ENCODE measurements at regions of chr12 and their contacts with region 1.

Region 1: DNA sequence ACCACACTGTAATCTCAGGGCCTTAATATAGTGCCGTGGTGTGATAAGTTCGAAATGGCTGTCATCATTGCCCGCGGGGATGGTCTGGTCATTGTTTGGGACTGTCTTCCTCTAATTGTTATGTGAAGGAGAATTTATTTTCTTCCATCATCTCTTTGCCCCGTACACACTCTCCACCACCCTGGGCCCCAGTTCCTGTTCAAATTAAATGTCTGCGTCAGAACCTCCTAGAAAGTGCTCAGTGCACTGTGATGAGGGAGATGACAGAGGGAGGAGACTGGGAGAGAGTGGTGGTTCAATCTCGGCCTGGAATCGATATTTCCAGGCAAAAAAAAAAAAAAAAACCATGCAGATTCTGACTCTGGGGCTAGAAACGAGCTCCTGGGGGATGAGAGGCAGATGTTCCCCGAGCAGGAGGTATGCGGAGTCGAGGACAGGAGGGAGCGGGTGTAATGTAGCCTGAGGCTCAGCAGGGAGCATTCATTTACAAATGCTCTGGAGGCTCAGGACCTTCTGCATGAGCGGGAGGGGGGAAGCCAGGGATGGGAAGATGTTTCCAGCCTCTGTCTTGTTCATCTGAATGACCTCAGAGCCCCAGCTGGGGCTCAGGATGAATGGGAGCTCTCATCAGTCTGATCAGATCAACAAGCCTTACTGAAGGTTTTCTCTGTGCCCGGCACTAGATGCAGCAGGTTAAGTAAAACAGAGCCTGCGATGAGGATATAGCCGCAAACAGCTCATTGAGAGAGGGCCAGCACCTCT is 219.5 kb downstream of the TBX5 start:
- DNase-seq: peak; percentile 44 to 97 (median 74)

Region 2: GRCh38 chr12:113965951-113966797 is 220.2 kb before region 1 on chr12 and contains the start of gene RBM19:
- intact Hi-C with region 1: loop called (anchors 2 kb)
- DNase-seq: peak; percentile 97 to 100 (median 98)

Region 3: GRCh38 chr12:114090211-114090610 is 96.2 kb before region 1 on chr12:
- intact Hi-C with region 1: no loop called
- DNase-seq: no peak

Measured in posterior cingulate gyrus (tissue), 11 donors.